ENCODE measurements at regions of chr19 and their contacts with region 1.

Region 1: GRCh38 chr19:44770550-44771257 is 7.0 kb upstream of the CBLC start:
- DNase-seq: no peak
- H3K4me3 ChIP-seq: no peak overlapping the region
- CTCF ChIP-seq: peak; percentile 67

Region 2: GRCh38 chr19:44530777-44531176 is 239.9 kb before region 1 on chr19:
- CTCF ChIA-PET with region 1: no interaction called
- POLR2A ChIA-PET with region 1: no interaction called
- DNase-seq: no peak
- H3K4me3 ChIP-seq: no peak overlapping the region
- CTCF ChIP-seq: no peak

Region 3: DNA sequence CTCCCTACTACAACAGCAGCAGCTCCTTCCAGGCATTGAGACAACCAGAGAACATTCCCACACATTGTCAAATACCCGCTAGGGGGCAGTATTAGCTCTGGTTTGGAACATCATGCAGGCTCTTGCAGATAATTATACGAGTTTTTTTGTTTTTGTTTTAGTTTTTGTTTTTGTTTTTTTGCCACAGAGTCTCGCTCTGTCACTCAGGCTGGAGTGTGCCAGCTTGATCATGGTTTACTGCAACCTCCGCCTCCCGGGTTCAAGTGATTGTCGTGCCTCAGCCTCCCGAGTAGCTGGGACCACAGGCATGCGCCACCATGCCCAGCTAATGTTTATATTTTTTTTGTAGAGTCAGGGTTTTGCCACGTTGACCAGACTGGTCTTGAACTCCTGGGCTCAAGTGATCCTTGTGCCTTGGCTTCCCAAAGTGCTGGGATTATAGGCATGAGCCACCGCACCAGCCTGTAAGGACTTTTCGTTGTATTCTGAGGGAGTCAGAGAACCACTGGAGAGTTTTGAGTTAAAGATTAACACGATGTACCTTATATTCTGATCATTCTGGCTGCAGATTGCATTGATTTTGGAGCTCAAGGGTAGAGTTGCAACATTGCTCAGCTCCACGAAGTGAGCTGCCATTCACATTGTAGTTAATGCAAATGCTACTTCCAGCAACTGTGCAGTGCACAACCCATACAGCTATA is 199.6 kb before region 1 on chr19:
- CTCF ChIA-PET with region 1: interaction called, 21 read pairs
- POLR2A ChIA-PET with region 1: no interaction called
- DNase-seq: peak; percentile 34
- H3K4me3 ChIP-seq: no peak overlapping the region
- CTCF ChIP-seq: peak; percentile 54

Region 4: DNA sequence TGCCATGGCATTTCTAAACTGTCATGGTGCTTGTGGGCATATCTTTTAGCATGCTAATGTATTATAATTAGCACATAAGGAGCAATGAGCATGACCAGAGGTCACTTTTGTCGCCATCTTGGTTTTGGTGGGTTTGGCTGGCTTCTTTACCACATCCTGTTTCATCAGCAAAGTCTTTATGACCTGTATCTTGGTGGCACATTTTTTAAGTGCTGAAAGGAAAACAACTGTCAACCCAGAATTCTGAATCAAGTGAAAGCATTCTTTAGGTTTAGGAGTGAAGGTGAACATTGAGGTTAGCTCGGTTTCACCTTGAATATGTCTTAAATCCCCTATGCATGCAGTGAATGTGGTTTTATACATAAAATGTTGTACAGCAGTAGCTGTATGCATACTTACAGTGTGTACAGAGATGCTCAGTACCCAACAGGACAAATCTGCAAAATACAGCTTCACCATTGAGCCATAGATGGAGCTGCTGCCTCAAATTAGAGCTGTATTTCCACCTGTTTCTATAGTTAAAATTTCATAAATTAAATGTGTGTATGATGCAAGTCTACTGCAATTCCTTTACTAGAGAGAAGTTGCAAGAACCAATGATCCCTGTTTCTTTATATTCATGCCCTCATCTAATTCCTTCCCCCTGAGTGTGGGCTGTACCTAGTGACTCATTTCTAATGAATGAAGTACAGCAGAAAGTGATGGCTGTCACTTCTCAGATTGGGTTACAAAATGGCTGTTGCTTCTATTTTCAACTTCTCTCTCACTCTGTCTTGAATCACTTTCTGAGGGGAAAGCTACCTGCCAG is 182.5 kb before region 1 on chr19:
- CTCF ChIA-PET with region 1: interaction called, 22 read pairs
- POLR2A ChIA-PET with region 1: no interaction called
- DNase-seq: peak; percentile 89
- H3K4me3 ChIP-seq: no peak overlapping the region
- CTCF ChIP-seq: peak; percentile 38

Region 5: GRCh38 chr19:44662691-44663385 is 107.9 kb before region 1 on chr19:
- CTCF ChIA-PET with region 1: interaction called, 21 read pairs
- POLR2A ChIA-PET with region 1: no interaction called
- DNase-seq: no peak
- H3K4me3 ChIP-seq: no peak overlapping the region
- CTCF ChIP-seq: no peak

Region 6: DNA sequence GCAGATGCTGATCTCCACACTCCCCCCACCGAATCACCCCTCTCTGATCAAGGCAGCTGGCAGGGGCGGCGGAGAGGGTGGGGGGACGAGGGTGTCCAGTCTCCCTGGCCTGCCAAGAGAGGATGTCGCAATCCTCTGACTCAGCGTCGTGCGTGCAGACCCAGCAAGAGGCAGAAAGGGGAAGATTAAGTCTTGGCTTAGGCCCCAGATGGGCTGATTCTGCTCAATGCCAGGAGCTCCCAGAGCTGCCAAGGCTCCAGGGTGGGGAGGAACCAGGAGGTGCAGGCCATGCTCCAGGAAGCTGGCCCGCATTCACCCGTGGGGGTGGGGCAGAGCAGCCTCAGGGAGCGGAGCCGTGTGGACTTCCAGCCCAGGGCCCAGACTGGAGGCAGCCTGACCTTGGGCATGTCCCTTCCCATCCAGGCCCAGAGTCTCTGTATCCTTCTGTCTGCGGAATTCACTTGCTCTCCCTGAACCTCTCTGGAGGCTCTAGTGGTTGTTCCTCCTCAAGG is 28.8 kb before region 1 on chr19:
- CTCF ChIA-PET with region 1: interaction called, 23 read pairs
- POLR2A ChIA-PET with region 1: interaction called, 3 read pairs
- DNase-seq: peak; percentile 98
- H3K4me3 ChIP-seq: no peak overlapping the region
- CTCF ChIP-seq: no peak

Region 7: DNA sequence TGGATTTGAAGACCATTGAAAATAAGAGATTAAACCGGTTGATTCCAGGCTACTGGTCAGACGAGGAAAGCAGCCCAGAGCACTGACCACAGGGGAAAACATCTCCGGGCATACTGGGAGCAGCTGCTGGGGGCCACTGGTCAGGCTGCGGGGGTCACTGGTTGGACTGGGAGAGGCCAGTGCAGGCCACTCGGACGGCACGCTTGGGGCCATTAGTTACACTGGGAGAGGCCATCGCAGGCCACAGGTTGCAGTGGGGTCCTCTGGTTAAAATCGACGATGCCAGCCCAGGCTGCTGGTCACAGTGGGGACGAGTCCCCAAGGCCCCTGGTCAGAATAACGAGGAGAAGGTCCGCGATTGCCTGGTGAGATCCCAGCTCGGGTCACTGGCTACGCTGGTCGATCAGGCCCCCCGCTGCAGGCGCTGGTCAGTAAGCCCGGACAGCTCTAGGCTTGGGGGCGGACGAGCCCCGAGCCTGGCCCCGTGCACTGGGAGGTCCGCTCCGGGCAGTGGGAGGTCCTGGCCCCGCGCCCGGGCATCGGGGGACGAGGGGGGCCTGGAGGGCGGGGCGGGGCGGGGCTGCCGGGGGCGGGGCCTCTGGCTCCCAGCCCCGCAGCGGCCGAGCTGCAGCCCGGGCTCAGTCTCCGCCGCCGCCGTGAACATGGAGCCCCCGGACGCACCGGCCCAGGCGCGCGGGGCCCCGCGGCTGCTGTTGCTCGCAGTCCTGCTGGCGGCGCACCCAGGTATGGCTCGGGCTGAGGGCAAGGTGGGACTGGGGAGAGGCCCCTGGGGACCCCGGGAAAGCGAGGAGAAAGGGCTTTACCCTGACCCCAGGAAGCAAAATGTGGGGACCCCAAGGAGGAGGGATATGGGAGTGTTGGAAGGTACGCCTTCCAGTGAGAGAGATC is 38.0 kb after region 1 on chr19 and contains the start of gene BCAM:
- CTCF ChIA-PET with region 1: interaction called, 18 read pairs
- POLR2A ChIA-PET with region 1: no interaction called
- DNase-seq: no peak
- H3K4me3 ChIP-seq: peak within 1 kb of the TSS; percentile 64
- CTCF ChIP-seq: no peak

Measured in AG04449 (cell line).